Transverse colon (tissue), 4 donors: ENCODE measurements at regions of chr20 and their contacts with region 1.

Region 1: DNA sequence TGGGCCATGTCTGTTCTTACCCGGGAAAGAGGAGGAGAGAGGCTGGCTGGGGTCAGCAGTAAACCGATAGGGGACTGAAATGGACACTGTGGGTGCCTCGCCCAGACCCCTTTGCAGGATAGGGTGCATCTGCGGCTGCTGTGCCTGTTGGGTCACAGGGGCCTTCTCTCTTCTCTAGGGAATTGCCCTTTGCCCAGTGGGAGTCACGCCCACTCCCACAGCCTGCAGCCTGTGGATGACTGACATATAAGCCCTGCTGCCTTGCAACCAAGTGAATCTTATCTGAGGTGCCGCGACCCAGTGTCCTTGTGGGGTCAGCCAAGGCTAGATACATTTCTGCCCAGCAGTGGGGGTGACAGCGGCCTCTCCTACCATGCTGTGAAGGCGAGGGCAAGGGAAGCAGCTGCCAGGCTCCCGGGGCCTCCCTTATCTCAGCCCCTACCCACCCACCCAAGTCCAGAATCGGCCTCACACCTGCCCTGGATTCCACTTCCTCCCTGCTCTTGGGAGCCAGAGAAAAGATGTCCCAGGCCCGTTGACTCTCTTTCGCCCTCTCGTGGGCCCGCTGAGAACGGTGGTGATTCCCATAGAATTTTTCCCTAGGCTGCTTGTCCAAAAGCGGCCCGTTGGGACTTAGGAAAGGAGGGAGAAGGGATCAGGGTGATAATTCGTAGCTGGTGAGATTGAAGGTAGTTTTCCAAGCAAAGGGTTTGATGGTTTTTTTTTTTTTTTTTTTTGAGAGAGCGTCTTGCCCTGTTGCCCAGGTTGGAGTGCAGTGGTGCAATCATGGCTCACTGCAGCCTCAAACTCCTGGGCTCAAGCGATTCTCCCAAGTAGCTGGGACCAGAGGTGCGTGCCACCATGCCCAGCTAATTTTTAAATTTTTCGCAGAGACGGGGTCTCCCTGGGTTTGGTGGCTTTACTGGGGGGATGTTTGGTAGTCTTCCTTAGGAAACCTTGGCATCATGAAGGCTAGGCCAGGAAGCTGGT is 76.4 kb upstream of the RNF24 start:
- DNase-seq: peak; percentile 66
- H3K4me3 ChIP-seq: no peak overlapping the region
- H3K27ac ChIP-seq: no peak overlapping the region
- H3K4me1 ChIP-seq: no peaks in the 10 kb centered on the region
- H3K27me3 ChIP-seq: peaks cover 7% of the 10 kb centered on the region
- CTCF ChIP-seq: peak; percentile 44 to 67 (median 62)
- EP300 ChIP-seq: no peak
- POLR2A ChIP-seq: no peak

Region 2: GRCh38 chr20:3686867-3687321 is 404.9 kb before region 1 on chr20:
- in situ Hi-C with region 1: loop called in 1 of 4 experiments (anchors 25 kb)
- intact Hi-C with region 1: no loop called
- DNase-seq: peak; percentile 81
- H3K4me3 ChIP-seq: no peak overlapping the region
- H3K27ac ChIP-seq: peak overlapping the region; percentile 70 to 83 (median 76)
- H3K4me1 ChIP-seq: peaks cover 7 to 18% (median 9%) of the 10 kb centered on the region in 4 donors
- H3K27me3 ChIP-seq: peaks cover 14% of the 10 kb centered on the region
- CTCF ChIP-seq: no peak
- EP300 ChIP-seq: no peak
- POLR2A ChIP-seq: no peak

Region 3: DNA sequence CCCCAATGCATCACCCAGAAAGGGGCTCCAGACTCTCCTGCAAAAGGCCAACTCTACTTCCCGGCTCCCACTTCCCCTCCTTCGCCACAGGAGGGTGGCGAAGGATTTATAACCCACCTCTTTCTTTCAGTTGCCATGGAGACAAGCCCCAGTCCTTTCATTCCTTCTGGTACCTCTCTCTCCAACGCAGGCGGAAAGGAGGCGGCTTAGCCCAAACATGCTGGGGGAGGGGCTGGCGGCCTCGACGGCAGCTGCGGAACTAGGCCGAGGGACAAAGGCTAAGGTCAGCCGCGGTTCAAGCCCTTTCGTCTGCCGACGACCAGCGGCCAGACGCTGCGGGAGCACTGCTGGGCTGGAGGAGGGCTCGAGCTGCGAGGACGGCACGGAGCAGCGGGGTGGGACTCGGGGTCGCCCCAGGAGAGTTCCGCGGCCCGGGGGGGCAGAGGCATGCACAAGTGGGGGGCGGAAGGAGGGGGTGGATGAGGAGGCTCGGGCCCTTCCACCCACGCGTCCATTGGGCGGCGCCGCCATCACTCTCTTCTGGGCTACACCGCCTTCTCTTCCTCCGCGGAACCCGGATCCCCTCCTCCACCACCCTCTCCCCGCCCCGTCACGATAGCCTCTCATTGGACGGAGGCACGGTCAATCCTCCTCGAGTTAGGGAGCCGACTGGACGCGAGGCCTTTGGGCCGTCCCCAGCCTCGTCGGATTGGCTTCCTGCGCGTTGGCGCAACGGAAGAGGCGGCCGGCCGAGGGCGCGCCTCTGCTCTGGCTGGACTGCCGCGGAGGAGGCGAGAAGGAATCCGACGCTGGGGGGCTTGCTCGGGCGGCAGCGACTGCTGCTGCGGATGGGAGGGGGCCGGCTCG is 202.9 kb before region 1 on chr20 and contains the start of gene PANK2:
- in situ Hi-C with region 1: loop called in 2 of 4 experiments (anchors 25 kb)
- intact Hi-C with region 1: no loop called
- DNase-seq: peak; percentile 99
- H3K4me3 ChIP-seq: peak within 1 kb of the TSS; percentile 87 to 100 (median 96)
- H3K27ac ChIP-seq: peak within 1 kb of the TSS; percentile 93 to 100 (median 98)
- H3K4me1 ChIP-seq: peaks cover 19 to 47% (median 37%) of the 10 kb centered on the region in 4 donors
- H3K27me3 ChIP-seq: no peaks in the 10 kb centered on the region
- CTCF ChIP-seq: peak; percentile 40 to 75 (median 48)
- EP300 ChIP-seq: no peak
- POLR2A ChIP-seq: peak; percentile 90
- total RNA-seq, gene PANK2: 22.9 to 48.7 (median 38.2) TPM

Region 4: GRCh38 chr20:3924304-3925112 is 167.3 kb before region 1 on chr20:
- in situ Hi-C with region 1: loop called in 1 of 4 experiments (anchors 25 kb)
- intact Hi-C with region 1: no loop called
- DNase-seq: no peak
- H3K4me3 ChIP-seq: no peak overlapping the region
- H3K27ac ChIP-seq: no peak overlapping the region
- H3K4me1 ChIP-seq: peaks cover 0 to 13% (median 4%) of the 10 kb centered on the region in 4 donors
- H3K27me3 ChIP-seq: no peaks in the 10 kb centered on the region
- CTCF ChIP-seq: no peak
- EP300 ChIP-seq: no peak
- POLR2A ChIP-seq: no peak

Region 5: GRCh38 chr20:4202441-4202840 is 110.7 kb after region 1 on chr20:
- in situ Hi-C with region 1: no loop called
- intact Hi-C with region 1: no loop called
- DNase-seq: no peak
- H3K4me3 ChIP-seq: no peak overlapping the region
- H3K27ac ChIP-seq: no peak overlapping the region
- H3K4me1 ChIP-seq: no peaks in the 10 kb centered on the region
- H3K27me3 ChIP-seq: peaks cover 3% of the 10 kb centered on the region
- CTCF ChIP-seq: no peak
- EP300 ChIP-seq: no peak
- POLR2A ChIP-seq: no peak